AG04449 (cell line): ENCODE measurements at regions of chr19 and their contacts with region 1.

Region 1: GRCh38 chr19:18251587-18252369 is 22.5 kb downstream of the IQCN start:
- DNase-seq: no peak
- H3K4me3 ChIP-seq: no peak overlapping the region
- CTCF ChIP-seq: peak; percentile 85

Region 2: DNA sequence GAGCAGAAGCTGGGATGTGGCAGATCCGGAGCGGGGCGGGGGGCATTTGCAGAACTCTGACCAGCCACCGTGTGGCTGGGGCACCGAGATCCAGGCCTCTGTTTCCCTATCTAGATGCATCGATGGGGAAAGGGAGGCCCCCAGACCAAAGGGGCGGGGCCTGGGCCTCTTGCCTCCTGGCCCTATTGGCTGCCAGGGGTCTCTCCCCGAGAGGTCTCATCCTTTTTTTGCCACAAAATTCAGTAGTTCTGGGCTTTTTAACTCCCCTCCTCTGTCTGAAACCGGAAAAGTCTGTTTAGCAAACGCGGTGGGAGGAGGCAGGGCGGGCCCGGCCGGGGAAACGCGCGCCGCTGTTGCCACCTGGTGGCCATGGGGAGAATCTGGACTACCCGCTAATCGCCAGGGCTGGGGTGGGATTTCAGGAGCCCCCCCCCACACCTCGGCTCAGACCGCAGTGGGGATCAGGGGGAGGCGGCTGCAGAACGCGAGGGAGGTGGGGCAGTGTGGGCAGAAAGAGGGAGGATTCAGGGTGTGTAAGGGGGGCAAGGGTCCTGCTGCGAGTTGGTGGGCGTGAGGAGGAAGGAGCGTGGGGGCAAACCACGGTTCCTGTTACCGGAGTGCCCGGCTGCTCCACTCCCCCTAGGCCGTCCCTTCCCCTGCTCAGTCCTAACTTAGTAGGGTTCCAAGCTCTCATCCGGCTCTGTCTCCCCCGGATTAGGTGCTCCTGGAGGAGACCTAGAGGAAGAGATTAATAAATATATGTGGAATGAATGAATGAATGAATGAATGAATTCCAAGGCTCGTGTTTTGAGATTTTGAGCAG is 193.4 kb before region 1 on chr19:
- CTCF ChIA-PET with region 1: interaction called, 11 read pairs
- POLR2A ChIA-PET with region 1: interaction called, 3 read pairs
- DNase-seq: no peak
- H3K4me3 ChIP-seq: peak overlapping the region; percentile 30
- CTCF ChIP-seq: peak; percentile 93

Region 3: GRCh38 chr19:18160971-18161635 is 90.7 kb before region 1 on chr19:
- CTCF ChIA-PET with region 1: interaction called, 66 read pairs
- POLR2A ChIA-PET with region 1: no interaction called
- DNase-seq: no peak
- H3K4me3 ChIP-seq: peak overlapping the region; percentile 27
- CTCF ChIP-seq: peak; percentile 55

Region 4: DNA sequence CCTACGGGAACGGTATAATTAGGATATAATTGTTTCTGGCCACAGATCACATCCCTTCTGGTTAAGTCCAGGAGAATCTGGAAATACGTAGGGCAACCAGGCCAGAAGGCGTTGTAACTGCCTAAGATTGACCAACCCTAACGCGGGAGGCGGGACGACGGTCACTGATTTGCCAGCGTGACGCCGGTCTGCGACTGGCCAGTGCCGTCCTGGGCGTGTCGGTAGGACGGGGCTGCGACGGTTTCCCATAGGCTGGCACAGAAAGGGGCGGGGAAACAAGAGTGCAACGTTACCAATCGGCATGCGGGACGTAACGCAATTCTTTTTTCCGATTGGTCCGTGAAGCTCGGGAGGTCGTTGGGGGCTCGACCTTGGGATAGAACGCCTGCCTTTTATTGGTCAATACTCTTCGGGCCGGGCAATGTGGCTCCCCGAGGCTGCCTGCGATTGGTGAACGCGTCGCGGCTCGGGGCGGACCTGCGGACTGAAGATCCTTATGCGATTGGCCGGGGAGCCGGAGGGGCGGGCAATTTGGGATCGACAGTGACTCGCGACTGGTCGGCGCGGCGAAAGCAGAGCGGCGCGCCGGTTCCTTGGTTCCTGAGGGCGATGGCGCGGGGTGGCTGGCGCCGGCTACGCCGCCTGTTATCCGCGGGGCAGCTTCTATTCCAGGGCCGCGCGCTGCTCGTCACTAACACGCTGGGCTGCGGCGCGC is 58.9 kb before region 1 on chr19 and contains the start of gene MPV17L2:
- CTCF ChIA-PET with region 1: interaction called, 123 read pairs
- POLR2A ChIA-PET with region 1: interaction called, 3 read pairs
- DNase-seq: peak; percentile 100
- H3K4me3 ChIP-seq: peak within 1 kb of the TSS; percentile 77
- CTCF ChIP-seq: no peak

Region 5: GRCh38 chr19:18233224-18233825 is 18.5 kb before region 1 on chr19:
- CTCF ChIA-PET with region 1: interaction called, 17 read pairs
- POLR2A ChIA-PET with region 1: no interaction called
- DNase-seq: no peak
- H3K4me3 ChIP-seq: no peak overlapping the region
- CTCF ChIP-seq: no peak

Region 6: DNA sequence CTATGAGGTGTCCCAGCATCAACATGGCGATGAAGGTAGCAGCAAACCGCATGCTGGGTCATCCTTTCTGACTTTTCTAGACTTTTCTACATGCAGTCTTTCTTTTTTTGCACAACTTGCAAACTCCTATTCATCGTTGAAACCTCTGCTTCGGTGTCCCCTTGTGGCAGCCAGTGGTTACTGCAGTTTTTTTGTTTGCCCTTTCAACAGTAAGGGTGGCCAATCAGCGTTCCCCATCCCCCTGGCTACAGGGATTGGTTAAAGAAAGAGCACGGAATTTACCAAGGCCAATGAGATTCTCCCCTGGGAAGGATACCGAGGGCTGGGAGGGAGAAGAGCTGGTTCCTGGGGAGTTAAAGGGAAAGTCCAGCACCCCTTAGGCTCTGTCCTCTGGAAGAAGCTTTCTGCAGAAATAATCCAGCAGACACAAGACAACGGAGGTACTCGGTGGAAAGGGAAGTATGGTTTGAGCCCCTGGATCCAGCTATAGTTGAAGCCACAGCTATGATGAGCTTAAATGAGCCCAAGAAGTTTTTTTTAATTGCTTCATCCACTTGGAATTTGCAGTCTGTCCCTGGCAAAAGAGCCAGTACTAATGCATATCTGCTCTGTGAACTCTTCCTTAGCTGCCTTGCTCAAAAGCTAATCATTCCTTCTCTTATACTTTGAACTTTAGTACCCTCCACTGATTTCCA is 76.7 kb after region 1 on chr19:
- CTCF ChIA-PET with region 1: interaction called, 43 read pairs
- POLR2A ChIA-PET with region 1: no interaction called
- DNase-seq: peak; percentile 87
- H3K4me3 ChIP-seq: peak overlapping the region; percentile 46
- CTCF ChIP-seq: peak; percentile 78